Caco-2 (cell line): ENCODE measurements at regions of chr5 and their contacts with region 1.

Region 1: GRCh38 chr5:134140530-134141201 is 26.2 kb downstream of the TCF7 start:
- DNase-seq: peak; percentile 75 to 76
- H3K4me3 ChIP-seq: no peak overlapping the region
- H3K4me3 Mint-ChIP-seq: no peak overlapping the region
- H3K27ac Mint-ChIP-seq: peak overlapping the region; percentile 30
- H3K4me1 ChIP-seq: peaks cover 30% of the 10 kb centered on the region
- H3K4me1 Mint-ChIP-seq: peaks cover 22% of the 10 kb centered on the region
- H3K27me3 ChIP-seq: no peaks in the 10 kb centered on the region
- H3K27me3 Mint-ChIP-seq: no peaks in the 10 kb centered on the region
- CTCF ChIP-seq: peak; percentile 79 to 91

Region 2: DNA sequence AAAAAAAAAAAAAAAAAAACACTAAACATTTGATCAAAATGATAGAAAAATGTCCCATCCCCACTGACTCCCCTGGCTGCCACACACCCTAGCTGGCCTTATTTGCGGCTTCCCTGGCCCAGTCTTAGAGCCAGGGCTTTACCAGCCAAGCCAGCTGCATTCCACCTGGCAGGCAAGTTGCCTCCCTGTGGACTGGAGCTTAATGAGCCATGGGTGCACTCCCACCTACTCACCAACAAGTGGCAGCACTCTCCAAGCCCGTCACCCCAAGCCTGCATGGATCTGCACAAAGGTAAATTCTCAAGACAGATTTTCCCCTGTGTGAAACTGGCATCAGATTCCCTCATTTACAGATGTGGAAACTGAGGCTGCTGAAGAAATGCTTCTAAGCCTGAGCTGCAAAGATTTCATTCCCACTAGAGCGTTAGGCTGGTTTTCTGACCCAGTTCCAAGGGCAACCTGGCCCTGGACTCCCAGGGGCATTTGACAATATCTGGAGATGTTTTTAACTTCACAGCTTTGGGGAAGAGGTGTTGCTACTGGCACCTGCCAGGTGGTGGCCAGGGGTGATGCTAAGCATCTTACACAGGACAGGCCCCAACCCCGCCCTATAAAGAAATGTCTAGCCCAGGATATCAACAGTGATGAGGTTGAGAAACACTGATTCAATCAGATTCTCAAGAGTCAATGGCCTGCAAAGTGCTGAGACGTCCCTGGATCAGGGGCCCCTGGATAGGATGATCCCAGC is 114.0 kb before region 1 on chr5:
- CTCF ChIA-PET with region 1: interaction called, 14 read pairs
- POLR2A ChIA-PET with region 1: no interaction called
- intact Hi-C with region 1: loop called (anchors 1 kb)
- DNase-seq: peak; percentile 78 to 84
- H3K4me3 ChIP-seq: no peak overlapping the region
- H3K4me3 Mint-ChIP-seq: no peak overlapping the region
- H3K27ac Mint-ChIP-seq: no peak overlapping the region
- H3K4me1 ChIP-seq: peaks cover 7% of the 10 kb centered on the region; the same call in 1 of the 2 replicates
- H3K4me1 Mint-ChIP-seq: peaks cover 6% of the 10 kb centered on the region
- H3K27me3 ChIP-seq: no peaks in the 10 kb centered on the region
- H3K27me3 Mint-ChIP-seq: no peaks in the 10 kb centered on the region
- CTCF ChIP-seq: peak; percentile 56 to 84

Region 3: DNA sequence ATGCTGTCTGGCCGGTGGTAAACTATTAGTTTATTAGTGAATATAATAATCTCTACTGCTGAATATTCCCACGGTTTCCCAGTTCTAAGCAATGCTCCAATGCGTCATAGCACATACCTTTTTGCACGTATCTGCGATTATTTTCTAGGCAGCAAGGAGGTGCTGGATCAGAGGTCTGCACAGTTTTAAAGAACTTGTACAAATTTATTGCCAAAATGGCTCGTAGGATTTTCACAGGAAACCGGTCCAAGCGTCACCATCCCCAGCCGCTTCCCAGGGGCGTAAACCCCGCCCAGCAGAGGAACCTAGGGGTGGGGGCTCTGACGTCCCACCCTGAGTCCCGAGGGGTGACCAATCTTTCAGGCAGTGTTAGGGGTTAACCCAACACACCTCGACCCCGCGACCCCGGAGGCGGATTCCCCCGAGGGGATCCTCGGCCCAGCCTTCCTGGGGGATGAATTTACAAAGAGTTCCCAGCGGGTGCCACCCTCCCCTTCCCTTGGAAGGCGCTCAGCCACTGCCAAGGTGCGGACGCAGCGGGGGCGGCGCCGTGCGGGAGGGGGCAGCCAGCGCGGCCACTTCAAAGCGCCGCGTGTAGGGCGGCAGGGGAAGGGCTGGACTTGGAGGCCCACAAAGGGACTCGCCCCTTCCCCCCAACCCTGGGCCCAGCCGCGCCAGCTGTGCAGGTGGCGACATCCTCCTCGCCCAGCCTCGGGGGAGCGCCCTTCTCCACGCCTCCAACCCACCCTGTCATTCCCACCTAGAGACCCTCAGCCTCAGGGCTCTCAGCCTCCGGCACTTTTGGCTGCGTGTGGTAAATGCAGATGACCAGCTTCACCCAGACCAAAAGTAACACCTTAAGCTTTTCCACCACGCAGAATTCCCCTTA is 69.7 kb before region 1 on chr5:
- CTCF ChIA-PET with region 1: no interaction called
- POLR2A ChIA-PET with region 1: no interaction called
- intact Hi-C with region 1: loop called (anchors 1 kb)
- DNase-seq: peak; percentile 63 to 70
- H3K4me3 ChIP-seq: peak overlapping the region; percentile 46
- H3K4me3 Mint-ChIP-seq: peak overlapping the region; percentile 65
- H3K27ac Mint-ChIP-seq: no peak overlapping the region
- H3K4me1 ChIP-seq: peaks cover 8% of the 10 kb centered on the region; the same call in 1 of the 2 replicates
- H3K4me1 Mint-ChIP-seq: no peaks in the 10 kb centered on the region
- H3K27me3 ChIP-seq: no peaks in the 10 kb centered on the region
- H3K27me3 Mint-ChIP-seq: no peaks in the 10 kb centered on the region
- CTCF ChIP-seq: peak in 1 of 2 experiments; percentile 23

Region 4: GRCh38 chr5:134100283-134101091 is 40.2 kb before region 1 on chr5:
- CTCF ChIA-PET with region 1: interaction called, 5 read pairs
- POLR2A ChIA-PET with region 1: no interaction called
- intact Hi-C with region 1: loop called (anchors 2 kb)
- DNase-seq: no peak
- H3K4me3 ChIP-seq: no peak overlapping the region
- H3K4me3 Mint-ChIP-seq: no peak overlapping the region
- H3K27ac Mint-ChIP-seq: no peak overlapping the region
- H3K4me1 ChIP-seq: peaks cover 22% of the 10 kb centered on the region
- H3K4me1 Mint-ChIP-seq: peaks cover 7% of the 10 kb centered on the region
- H3K27me3 ChIP-seq: no peaks in the 10 kb centered on the region
- H3K27me3 Mint-ChIP-seq: no peaks in the 10 kb centered on the region
- CTCF ChIP-seq: no peak

Region 5: DNA sequence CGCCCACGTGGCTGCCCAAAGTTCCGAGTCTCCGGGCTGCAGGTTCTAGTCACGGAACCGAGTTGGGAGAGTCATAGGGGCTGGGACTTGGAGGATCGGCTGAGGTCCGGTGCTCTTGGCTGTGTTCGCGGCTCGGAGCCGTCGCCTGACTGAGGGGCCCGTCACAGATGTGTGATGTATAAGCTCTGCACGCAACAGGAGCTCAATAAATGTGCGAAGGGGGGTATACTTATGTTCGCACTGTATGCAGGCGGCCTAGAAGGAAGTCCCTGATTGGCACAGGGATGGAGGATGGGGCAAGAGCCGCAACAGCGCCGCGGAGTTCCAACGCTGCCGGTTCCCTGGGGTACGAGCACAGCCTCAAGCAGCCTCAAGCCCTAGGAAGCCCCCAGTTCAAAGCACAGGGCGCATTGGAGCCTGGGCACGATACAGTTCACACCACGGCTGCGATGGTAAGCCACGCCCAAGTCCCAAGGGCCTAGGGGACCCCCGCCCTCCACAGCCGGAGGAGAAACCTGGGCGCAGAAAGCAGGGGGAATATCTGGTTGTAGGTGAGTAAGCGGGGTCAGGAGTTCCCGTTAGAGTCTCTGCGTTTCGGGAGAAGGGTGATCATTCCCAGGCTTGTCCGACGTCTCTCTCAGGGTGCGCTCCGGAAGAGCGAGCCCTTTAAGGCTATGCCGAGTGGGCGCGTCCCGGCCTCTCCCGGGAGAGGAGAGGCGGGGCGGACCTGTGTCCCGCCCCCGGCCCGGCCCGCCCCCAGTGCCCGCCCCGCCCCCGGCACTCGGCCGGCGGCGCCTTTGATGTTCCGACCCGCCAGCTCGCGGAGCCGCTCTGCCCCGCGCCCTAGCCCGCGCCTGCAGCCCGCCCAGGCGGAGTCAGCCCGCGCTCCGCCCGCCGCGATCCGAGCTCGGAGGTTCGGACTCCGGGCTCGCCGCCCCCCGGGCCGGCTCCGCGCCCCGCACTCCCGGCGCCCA is 26.5 kb before region 1 on chr5 and contains the start of gene TCF7:
- CTCF ChIA-PET with region 1: interaction called, 3 read pairs
- POLR2A ChIA-PET with region 1: no interaction called
- intact Hi-C with region 1: loop called (anchors 1 kb)
- DNase-seq: peak; percentile 80 to 88
- H3K4me3 ChIP-seq: peak within 1 kb of the TSS; percentile 87
- H3K4me3 Mint-ChIP-seq: peak within 1 kb of the TSS; percentile 83
- H3K27ac Mint-ChIP-seq: peak within 1 kb of the TSS; percentile 67
- H3K4me1 ChIP-seq: peaks cover 12% of the 10 kb centered on the region
- H3K4me1 Mint-ChIP-seq: peaks cover 6% of the 10 kb centered on the region
- H3K27me3 ChIP-seq: no peaks in the 10 kb centered on the region
- H3K27me3 Mint-ChIP-seq: no peaks in the 10 kb centered on the region
- CTCF ChIP-seq: no peak
- total RNA-seq, gene TCF7: 36.2 and 36.5 TPM in 2 replicates